Breast epithelium (tissue), 4 donors: ENCODE measurements at regions of chr3 and their contacts with region 1.

Region 1: DNA sequence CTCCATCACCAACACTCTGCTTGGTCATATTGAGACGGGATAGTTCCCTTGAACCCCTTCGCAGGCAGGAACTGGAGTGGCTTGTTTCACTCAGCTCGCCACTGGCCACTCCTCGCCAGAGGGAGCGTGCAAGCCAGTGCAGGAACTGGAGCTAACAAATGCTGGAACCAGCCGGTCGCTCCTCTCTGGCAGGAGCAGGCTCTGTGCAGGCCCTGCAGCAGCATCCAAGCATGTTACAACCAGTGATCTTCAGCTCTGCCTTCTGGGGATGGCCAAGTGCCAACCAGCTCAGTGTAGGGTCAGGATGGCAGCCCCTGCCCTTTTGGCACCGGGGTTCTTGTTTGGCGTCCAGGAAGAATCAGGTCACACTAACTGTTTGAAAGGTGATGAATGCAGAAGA is 329.0 kb upstream of the AZI2 start:
- DNase-seq: no peak
- H3K4me3 ChIP-seq: no peak overlapping the region
- H3K27ac ChIP-seq: no peak overlapping the region
- H3K4me1 ChIP-seq: no peaks in the 10 kb centered on the region
- H3K27me3 ChIP-seq: no peaks in the 10 kb centered on the region
- CTCF ChIP-seq: no peak
- POLR2A ChIP-seq: no peak

Region 2: DNA sequence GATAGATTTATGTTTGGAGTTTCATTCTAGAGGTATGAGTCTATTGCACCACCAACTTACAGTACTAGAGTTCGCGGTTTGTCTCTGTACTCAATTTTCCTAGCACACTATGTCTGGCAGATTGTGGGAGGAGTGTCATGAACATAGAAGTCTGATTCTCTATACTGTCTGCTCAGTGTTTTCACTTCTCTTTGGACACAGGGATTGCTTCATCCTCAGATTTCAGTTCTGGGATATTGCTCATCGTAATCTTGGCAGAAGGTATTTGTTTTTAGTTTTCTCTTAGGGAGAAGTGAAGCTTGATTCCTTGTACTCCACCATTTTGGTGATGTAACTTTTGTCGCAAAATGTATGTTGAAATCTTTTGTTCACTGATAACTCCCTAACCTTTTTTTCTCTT is 301.2 kb before region 1 on chr3:
- intact Hi-C with region 1: loop called (anchors 5 kb)
- DNase-seq: no peak
- H3K4me3 ChIP-seq: no peak overlapping the region
- H3K27ac ChIP-seq: no peak overlapping the region
- H3K4me1 ChIP-seq: no peaks in the 10 kb centered on the region
- H3K27me3 ChIP-seq: no peaks in the 10 kb centered on the region
- CTCF ChIP-seq: no peak
- POLR2A ChIP-seq: no peak

Region 3: GRCh38 chr3:29415482-29416223 is 738.1 kb after region 1 on chr3:
- intact Hi-C with region 1: loop called (anchors 5 kb)
- DNase-seq: no peak
- H3K4me3 ChIP-seq: no peak overlapping the region
- H3K27ac ChIP-seq: no peak overlapping the region
- H3K4me1 ChIP-seq: no peaks in the 10 kb centered on the region
- H3K27me3 ChIP-seq: no peaks in the 10 kb centered on the region
- CTCF ChIP-seq: no peak
- POLR2A ChIP-seq: no peak